Activated B cell treated with CpG ODN at 0.5 μM for 24 hours (primary cell): ENCODE measurements at regions of chr12 and their contacts with region 1.

Region 1: DNA sequence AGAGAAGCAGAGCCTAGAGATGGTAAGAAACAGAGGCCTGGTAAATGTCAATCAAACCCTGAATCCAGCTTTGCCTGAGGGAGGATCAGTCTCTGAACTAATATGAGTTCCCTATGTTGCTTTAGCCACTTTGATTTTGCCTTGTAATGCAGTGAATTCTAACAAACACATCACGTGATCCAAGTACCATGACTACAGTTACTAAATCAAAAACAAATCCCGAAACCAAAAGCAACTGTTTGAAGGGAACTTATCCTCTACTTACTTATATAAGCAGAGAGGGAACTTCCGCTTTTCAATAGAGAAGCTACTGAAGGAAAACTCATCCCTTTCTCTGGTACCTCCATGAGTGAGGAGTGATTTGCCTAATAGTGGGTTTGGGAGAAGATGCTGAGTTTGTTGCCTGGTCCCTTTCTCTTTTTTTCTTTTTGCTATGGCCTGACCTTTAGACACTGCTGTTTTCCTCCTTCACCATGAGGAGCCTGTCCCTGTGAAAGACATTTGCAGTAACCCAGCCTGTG is 7.7 kb upstream of the PPTC7 start:
- DNase-seq: no peak
- ATAC-seq: peak; percentile 85
- H3K4me3 Mint-ChIP-seq: peak overlapping the region; percentile 60
- H3K27ac Mint-ChIP-seq: peak overlapping the region; percentile 97
- H3K4me1 Mint-ChIP-seq: peaks cover 45% of the 10 kb centered on the region
- H3K27me3 Mint-ChIP-seq: no peaks in the 10 kb centered on the region
- CTCF ChIP-seq: no peak

Region 2: DNA sequence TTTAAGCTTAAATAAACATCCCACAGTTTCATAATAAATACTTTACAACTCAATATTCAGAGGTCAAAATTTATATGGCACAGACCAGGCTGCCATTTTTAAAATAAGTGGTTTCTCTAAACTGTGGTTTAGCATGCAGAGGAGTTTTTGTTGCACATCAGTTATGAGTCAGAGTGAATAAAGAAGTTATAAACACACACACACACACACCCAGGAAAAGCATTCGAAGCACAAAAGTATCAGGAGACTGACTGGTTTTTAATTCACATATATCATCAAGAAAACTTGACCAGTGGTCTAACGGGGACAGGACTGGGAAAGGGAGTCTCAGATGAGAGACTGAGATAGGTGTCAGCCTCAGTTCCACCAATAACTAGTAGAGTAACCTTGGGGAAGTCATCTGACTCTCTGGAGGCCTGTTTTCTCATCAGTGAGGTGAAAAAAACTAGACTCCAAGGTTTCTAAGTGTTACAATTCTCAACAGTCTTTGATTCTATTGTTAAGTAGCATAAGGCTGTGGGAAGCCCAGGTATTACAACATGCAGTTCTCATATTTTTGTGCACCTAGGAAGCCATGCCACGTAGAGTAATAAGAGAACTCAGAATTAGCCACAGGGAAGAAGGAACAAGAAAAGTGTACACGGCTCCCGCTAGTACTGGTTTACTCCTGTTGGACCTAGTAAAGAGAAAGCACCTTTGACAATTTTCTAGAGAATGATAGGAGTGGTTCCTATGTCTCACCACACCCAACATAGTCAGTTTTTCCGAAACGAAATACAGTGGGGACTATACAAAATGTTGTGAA is 12.9 kb before region 1 on chr12:
- CTCF ChIA-PET with region 1: no interaction called
- POLR2A ChIA-PET with region 1: interaction called, 10 read pairs
- intact Hi-C with region 1: loop called (anchors 1 kb)
- DNase-seq: no peak
- ATAC-seq: peak; percentile 12
- H3K4me3 Mint-ChIP-seq: peak overlapping the region; percentile 47
- H3K27ac Mint-ChIP-seq: peak overlapping the region; percentile 84
- H3K4me1 Mint-ChIP-seq: peaks cover 70% of the 10 kb centered on the region
- H3K27me3 Mint-ChIP-seq: no peaks in the 10 kb centered on the region
- CTCF ChIP-seq: no peak

Region 3: DNA sequence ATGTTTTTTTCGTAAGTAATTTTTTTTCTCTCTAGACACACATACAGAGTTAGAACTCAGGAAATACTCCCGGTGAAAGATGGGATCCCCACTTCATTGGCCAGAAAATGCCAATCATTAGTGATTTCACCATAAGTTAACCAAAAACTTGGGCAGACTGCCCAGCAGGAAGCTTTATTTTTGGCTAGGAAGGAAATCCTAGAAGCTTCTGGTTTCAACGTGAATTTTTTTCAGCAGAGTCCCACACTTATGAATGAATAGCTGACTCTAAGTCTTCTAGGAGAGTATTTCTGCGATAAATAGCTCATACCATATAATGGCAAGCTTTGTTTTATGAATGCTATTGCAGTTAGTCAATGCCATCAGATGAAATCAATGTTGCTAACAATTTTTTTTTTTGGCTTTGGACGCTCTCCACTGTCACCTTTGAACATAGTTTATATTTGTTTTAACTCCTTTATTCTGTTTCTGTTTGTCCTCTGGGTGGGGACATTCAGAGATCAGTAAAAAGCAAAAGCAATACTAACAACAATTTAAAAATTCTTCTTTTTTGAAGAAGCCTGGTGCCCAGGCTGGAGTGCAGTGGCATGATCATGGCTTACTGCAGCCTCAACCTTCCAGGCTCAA is 142.3 kb after region 1 on chr12:
- CTCF ChIA-PET with region 1: no interaction called
- POLR2A ChIA-PET with region 1: no interaction called
- intact Hi-C with region 1: no loop called
- DNase-seq: no peak
- ATAC-seq: no peak
- H3K4me3 Mint-ChIP-seq: no peak overlapping the region
- H3K27ac Mint-ChIP-seq: peak overlapping the region; percentile 30
- H3K4me1 Mint-ChIP-seq: peaks cover 72% of the 10 kb centered on the region
- H3K27me3 Mint-ChIP-seq: no peaks in the 10 kb centered on the region
- CTCF ChIP-seq: no peak